GM12878 (cell line): ENCODE measurements at regions of chr11 and their contacts with region 1.

Region 1: GRCh38 chr11:128905345-128906184 is 14.4 kb downstream of the KCNJ5 start:
- DNase-seq: no peak
- ATAC-seq: peak; percentile 80
- H3K4me3 ChIP-seq: peak overlapping the region; percentile 60
- H3K27ac ChIP-seq: no peak overlapping the region
- H3K4me1 ChIP-seq: no peaks in the 10 kb centered on the region
- H3K27me3 ChIP-seq: peaks cover 0 to 14% of the 10 kb centered on the region in 2 experiments; a peak in 1 of 4 replicates
- CTCF ChIP-seq: peak; percentile 27 to 48 (median 35); a peak in 4 of 6 replicates
- EP300 ChIP-seq: no peak
- POLR2A ChIP-seq: no peak
- RAD21 ChIP-seq: 0 out of 2 replicates have a peak, but pooled peaks have one; percentile 18

Region 2: DNA sequence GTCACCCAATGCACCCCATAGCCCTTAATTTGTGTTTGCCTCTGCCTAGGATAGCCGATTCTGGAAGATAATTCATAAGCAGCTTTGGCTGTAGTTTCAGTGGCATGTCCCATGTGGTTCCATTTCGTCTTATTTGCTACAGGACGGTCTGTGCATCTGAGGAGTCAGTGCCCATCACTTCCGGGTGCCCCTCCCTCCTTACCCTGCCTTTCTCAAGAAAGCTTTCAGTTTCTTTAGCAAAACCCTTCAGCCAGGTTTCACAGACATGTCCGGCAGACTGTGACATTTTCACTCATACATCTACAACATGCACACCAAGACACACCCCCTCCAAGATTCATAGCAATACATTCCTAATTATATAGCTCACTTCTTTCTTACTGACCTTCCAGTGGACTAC is 22.8 kb after region 1 on chr11:
- CTCF ChIA-PET with region 1: interaction called, 12 read pairs
- POLR2A ChIA-PET with region 1: interaction called, 4 read pairs
- RAD21 ChIA-PET with region 1: interaction called, 4 read pairs
- SMC1A ChIA-PET with region 1: interaction called, 6 read pairs
- in situ Hi-C with region 1: no loop called
- intact Hi-C with region 1: no loop called
- DNase-seq: peak; percentile 65
- ATAC-seq: peak; percentile 96
- H3K4me3 ChIP-seq: no peak overlapping the region
- H3K27ac ChIP-seq: no peak overlapping the region
- H3K4me1 ChIP-seq: peaks cover 5% of the 10 kb centered on the region
- H3K27me3 ChIP-seq: no peaks in the 10 kb centered on the region
- CTCF ChIP-seq: no peak
- EP300 ChIP-seq: no peak
- POLR2A ChIP-seq: no peak
- RAD21 ChIP-seq: no peak